Panc1 (cell line): ENCODE measurements at regions of chr7 and their contacts with region 1.

Region 1: DNA sequence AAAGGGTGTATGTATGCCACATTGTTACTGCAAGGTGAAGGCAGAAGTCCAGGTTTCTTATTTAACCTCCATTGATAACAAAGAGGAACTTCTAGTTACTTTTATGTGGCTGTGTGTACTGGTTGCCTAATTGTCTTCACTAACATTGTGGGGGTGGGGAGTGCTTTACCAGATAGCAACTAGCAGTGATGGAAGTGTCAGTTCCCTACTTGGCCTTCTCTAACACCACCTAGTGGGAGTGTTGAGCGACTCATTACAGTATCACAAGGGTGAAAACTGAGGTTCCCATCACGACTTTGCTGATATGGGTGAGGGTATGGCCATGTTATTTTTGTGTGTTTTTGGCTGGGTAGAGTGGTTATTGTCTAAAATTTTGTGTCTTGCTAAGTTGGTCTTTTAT is 274.4 kb downstream of the THSD7A start:
- DNase-seq: peak; percentile 13
- ATAC-seq: no peak
- H3K4me3 ChIP-seq: no peak overlapping the region
- H3K27ac ChIP-seq: no peak overlapping the region
- H3K4me1 ChIP-seq: no peaks in the 10 kb centered on the region
- H3K27me3 ChIP-seq: no peaks in the 10 kb centered on the region
- CTCF ChIP-seq: peak; percentile 54

Region 2: GRCh38 chr7:11355399-11356005 is 202.1 kb before region 1 on chr7:
- CTCF ChIA-PET with region 1: no interaction called
- POLR2A ChIA-PET with region 1: no interaction called
- in situ Hi-C with region 1: no loop called
- intact Hi-C with region 1: no loop called
- DNase-seq: no peak
- ATAC-seq: no peak
- H3K4me3 ChIP-seq: no peak overlapping the region
- H3K27ac ChIP-seq: no peak overlapping the region
- H3K4me1 ChIP-seq: no peaks in the 10 kb centered on the region
- H3K27me3 ChIP-seq: peaks cover 17% of the 10 kb centered on the region
- CTCF ChIP-seq: no peak

Region 3: GRCh38 chr7:11434366-11434765 is 123.3 kb before region 1 on chr7:
- CTCF ChIA-PET with region 1: interaction called, 3 read pairs
- POLR2A ChIA-PET with region 1: no interaction called
- in situ Hi-C with region 1: no loop called
- intact Hi-C with region 1: loop called (anchors 5 kb)
- DNase-seq: no peak
- ATAC-seq: no peak
- H3K4me3 ChIP-seq: no peak overlapping the region
- H3K27ac ChIP-seq: no peak overlapping the region
- H3K4me1 ChIP-seq: no peaks in the 10 kb centered on the region
- H3K27me3 ChIP-seq: no peaks in the 10 kb centered on the region
- CTCF ChIP-seq: no peak